Activated CD4-positive, alpha-beta memory T cell treated with anti-CD3 and anti-CD28 coated beads, Interleukin-2, amount 10 ng/mL, durations not matched to agents 7 days and 5 days (primary cell): ENCODE measurements at regions of chr7 and their contacts with region 1.

Region 1: DNA sequence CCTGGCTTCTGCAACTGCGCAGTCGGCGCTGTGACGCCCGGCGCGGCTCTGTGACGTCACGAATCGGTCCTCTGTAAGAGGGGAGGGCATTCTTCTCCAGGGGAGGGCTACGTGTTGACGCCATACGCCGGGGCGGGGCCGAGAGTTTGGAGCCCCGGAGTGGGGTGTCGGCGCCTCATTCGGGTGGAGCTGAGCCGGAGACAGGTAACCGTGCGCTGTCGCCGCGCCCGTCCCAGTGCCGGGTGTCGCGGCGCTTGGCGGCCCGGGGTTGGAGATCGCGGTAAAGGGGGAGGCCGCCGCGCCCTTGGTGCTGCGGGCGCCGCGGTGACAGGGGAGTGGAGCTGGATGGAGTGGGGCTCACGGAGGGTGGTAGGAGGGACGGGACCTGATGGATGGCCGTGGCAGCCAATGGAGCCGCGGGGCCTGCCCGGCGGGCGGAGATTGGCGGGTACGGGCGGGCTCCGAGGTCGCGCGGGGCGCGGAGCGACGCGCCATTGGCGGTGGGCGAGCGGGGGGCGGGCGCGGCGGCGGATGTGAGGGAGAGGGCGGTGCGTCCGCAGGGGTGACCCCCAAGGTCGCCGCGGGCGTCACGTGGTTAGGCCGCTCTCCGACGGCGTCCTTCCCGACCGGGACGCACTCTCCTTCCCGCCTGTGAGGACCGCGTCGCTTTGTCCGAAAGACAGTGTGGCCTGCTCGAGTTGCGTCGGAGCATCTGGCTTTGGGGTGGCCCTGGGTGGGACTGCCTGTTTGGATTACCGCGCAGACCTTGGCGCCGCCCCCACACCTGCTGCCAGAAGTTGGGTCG is at the start of gene OGDH:
- DNase-seq: peak; percentile 100
- H3K4me3 Mint-ChIP-seq: peak within 1 kb of the TSS; percentile 98
- H3K27ac Mint-ChIP-seq: peak within 1 kb of the TSS; percentile 98
- H3K4me1 Mint-ChIP-seq: peaks cover 48% of the 10 kb centered on the region
- H3K27me3 Mint-ChIP-seq: peaks cover 6% of the 10 kb centered on the region
- total RNA-seq, gene OGDH: 164 to 166 TPM

Region 2: DNA sequence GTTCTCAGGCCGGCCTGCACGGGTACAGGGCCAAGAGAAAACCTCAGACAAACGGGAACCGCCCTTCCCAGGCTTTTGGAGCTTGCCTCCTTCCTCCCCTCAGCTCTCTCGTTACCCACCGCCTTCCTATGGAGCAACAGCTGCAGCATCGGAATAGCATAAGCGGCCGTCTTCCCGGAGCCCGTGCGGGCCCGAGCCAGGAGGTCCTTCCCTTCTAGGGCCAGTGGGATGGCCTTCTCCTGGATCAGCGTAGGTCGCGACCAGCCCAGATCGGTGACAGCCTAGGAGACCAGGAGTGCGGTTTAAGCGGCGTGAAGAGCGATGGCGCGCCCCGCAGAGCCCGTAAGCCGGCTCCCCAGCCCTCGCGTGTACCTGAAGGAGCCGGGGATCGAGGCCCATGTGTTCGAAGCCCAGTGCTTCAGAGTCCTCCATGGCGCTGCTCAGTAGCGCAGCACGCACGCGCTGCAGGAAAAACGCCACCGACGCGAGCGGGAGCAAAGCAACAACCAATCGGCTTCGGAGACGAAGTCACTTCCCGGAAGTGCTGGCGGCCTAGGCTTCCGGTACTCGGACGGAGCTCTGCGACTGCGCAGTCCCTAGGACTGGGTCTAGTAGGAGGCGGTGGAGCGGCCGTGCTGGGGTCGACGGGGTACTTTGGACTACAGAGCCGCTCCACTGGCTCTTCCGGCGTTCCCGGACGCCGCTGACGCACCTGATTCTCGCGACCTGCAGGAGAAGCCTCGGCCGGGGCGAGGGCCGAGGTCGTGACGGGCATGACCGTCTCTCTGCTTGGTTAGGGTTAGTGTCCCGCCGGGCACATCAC is 33.0 kb before region 1 on chr7 and contains the start of gene DDX56:
- CTCF ChIA-PET with region 1: no interaction called
- POLR2A ChIA-PET with region 1: interaction called, 23 read pairs
- DNase-seq: peak; percentile 94
- H3K4me3 Mint-ChIP-seq: peak within 1 kb of the TSS; percentile 96
- H3K27ac Mint-ChIP-seq: peak within 1 kb of the TSS; percentile 87
- H3K4me1 Mint-ChIP-seq: peaks cover 44% of the 10 kb centered on the region
- H3K27me3 Mint-ChIP-seq: no peaks in the 10 kb centered on the region
- total RNA-seq, gene DDX56: 59.0 to 59.6 TPM

Region 3: DNA sequence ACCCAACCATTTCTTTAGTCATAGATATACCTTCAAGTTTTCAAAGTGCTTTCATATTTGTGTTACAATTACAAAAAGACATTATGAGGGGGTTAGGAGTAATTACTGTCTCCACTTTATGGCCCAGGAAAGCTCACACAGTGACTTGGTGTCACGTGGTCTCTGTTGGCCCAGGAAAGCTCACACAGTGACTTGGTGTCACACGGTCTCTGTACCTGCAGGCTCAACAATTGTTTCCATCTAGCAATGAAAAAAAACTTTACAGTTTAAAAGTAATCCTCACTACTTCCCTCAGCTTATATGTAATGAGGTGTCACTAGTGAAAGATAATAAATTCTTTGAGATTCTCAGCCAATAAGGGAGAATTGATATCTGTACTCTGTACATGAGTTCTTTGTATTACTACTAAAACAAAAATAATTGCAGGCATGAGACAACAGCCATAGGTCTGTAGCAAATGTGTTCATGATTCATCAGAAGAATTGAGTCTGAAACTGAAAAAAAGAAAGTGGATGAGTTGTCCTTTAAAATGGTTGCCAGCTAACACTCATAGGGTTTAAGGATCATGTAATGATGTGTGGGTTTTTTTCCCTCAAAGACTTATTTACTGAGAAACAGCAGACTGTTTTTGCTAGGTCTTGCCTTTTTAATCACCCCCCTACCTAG is 10.7 kb after region 1 on chr7:
- CTCF ChIA-PET with region 1: interaction called, 8 read pairs
- POLR2A ChIA-PET with region 1: interaction called, 69 read pairs
- DNase-seq: no peak
- H3K4me3 Mint-ChIP-seq: no peak overlapping the region
- H3K27ac Mint-ChIP-seq: peak overlapping the region; percentile 80
- H3K4me1 Mint-ChIP-seq: peaks cover 82% of the 10 kb centered on the region
- H3K27me3 Mint-ChIP-seq: no peaks in the 10 kb centered on the region

Region 4: DNA sequence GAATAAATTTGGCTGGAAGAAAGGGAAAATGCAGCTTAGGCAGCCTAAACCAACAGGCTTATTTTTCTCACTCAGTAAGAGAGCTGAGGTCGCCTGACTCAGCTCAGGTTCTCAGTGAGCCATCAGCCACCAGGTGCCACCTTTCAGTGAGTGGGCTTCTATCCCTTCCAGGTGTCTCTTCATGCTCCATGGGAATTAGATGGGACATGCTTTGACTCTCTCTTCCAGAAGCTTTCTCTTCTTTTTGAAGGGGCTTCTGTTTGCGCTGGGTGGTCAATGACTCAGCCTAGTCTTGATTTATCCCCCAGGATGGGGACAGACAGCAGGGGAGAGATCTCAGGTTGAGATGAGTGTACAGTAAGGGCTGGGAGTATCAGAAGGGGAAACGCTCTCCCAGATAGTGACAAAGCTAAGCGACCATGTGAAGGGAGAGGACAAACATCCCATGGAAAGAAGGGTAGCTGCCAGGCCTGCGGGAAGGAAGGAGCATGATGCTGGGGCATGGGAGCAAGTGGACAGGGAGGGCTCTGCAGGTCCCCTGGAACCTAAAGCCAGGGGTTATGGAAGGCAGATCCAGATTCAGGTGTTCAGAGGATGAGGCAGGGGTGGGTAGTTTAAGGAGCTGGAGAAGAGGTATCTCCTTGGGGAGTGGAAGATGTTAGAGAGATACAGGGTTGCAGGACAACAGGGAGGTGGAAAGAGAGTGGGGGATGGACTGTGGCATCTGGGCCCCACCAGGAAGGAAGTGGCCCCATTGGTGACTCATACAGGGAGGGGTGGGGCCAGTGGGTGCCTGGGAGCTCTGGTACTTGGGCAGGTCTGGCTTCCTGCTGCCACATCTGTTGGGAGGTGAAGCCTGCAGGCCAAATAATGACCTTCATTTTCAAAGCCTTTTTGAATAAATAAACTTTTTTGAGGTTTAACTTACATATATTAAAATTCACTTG is 32.2 kb after region 1 on chr7:
- CTCF ChIA-PET with region 1: interaction called, 17 read pairs
- POLR2A ChIA-PET with region 1: interaction called, 1,257 read pairs
- DNase-seq: peak; percentile 93
- H3K4me3 Mint-ChIP-seq: peak overlapping the region; percentile 73
- H3K27ac Mint-ChIP-seq: peak overlapping the region; percentile 100
- H3K4me1 Mint-ChIP-seq: peaks cover 83% of the 10 kb centered on the region
- H3K27me3 Mint-ChIP-seq: no peaks in the 10 kb centered on the region

Region 5: DNA sequence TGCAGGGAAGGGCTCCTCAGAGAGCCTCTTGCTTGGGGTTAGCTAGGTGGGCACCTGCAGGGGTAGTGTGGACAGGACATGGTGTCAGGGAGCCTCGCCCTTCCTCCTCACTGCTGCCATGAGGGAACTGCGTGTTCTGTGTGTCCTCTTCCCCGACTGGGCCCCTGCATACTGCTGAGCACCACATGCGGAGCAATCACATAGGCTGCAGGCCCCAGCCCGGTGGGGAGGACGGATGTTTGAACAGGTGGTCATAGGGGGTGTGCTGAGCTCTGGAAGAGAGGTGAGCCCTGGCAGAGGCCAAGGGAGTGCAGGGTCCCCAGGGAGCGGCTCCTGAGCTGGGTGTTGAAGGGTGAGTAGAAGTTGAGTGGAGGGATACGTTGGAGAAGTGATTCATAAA is 93.7 kb after region 1 on chr7:
- CTCF ChIA-PET with region 1: no interaction called
- POLR2A ChIA-PET with region 1: no interaction called
- DNase-seq: no peak
- H3K4me3 Mint-ChIP-seq: no peak overlapping the region
- H3K27ac Mint-ChIP-seq: no peak overlapping the region
- H3K4me1 Mint-ChIP-seq: no peaks in the 10 kb centered on the region
- H3K27me3 Mint-ChIP-seq: no peaks in the 10 kb centered on the region

Region 6: GRCh38 chr7:44769776-44770662 is 163.4 kb after region 1 on chr7:
- CTCF ChIA-PET with region 1: no interaction called
- POLR2A ChIA-PET with region 1: interaction called, 19 read pairs
- DNase-seq: peak; percentile 46
- H3K4me3 Mint-ChIP-seq: no peak overlapping the region
- H3K27ac Mint-ChIP-seq: peak overlapping the region; percentile 27
- H3K4me1 Mint-ChIP-seq: peaks cover 33% of the 10 kb centered on the region
- H3K27me3 Mint-ChIP-seq: peaks cover 4% of the 10 kb centered on the region